PC-3 (cell line): ENCODE measurements at regions of chr10 and their contacts with region 1.

Region 1: GRCh38 chr10:91493313-91493712 is 83.2 kb downstream of the HECTD2 start:
- DNase-seq: peak; percentile 65
- ATAC-seq: 0 out of 2 replicates have a peak, but pooled peaks have one; percentile 33
- H3K4me3 ChIP-seq: no peak overlapping the region
- H3K27ac ChIP-seq: no peak overlapping the region
- H3K4me1 ChIP-seq: no peaks in the 10 kb centered on the region
- H3K27me3 ChIP-seq: no peaks in the 10 kb centered on the region
- CTCF ChIP-seq: peak; percentile 63

Region 2: GRCh38 chr10:91406322-91406721 is 87.0 kb before region 1 on chr10:
- CTCF ChIA-PET with region 1: no interaction called
- POLR2A ChIA-PET with region 1: no interaction called
- intact Hi-C with region 1: no loop called
- DNase-seq: no peak
- ATAC-seq: no peak
- H3K4me3 ChIP-seq: no peak overlapping the region
- H3K27ac ChIP-seq: no peak overlapping the region
- H3K4me1 ChIP-seq: peaks cover 9% of the 10 kb centered on the region; the same call in 1 of the 2 replicates
- H3K27me3 ChIP-seq: no peaks in the 10 kb centered on the region
- CTCF ChIP-seq: no peak

Region 3: DNA sequence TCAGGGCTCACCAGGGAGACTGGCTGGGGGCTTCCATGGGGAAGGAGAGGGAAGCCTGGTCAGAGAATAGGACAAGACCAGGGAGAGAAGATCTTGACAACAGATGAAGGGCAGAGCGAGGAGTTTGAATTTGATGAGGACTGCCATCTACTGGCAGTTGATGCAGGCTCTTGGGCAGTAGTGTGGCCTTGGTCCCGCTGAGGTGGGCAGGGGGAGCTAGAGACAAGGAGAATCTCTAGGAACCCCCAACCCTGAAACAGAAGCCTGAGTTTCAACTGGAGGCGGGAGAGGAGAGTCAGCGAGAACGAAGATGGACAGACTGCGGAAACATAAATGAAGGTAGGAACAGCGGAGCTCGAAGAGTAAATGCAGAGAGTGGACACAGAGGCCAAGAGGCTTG is 58.5 kb after region 1 on chr10:
- CTCF ChIA-PET with region 1: no interaction called
- POLR2A ChIA-PET with region 1: no interaction called
- intact Hi-C with region 1: loop called (anchors 2 kb)
- DNase-seq: peak; percentile 40
- ATAC-seq: peak; percentile 90
- H3K4me3 ChIP-seq: no peak overlapping the region
- H3K27ac ChIP-seq: no peak overlapping the region
- H3K4me1 ChIP-seq: 0 out of 2 replicates have a peak, but pooled peaks cover 4% of the 10 kb centered on the region
- H3K27me3 ChIP-seq: no peaks in the 10 kb centered on the region
- CTCF ChIP-seq: peak; percentile 78

Region 4: DNA sequence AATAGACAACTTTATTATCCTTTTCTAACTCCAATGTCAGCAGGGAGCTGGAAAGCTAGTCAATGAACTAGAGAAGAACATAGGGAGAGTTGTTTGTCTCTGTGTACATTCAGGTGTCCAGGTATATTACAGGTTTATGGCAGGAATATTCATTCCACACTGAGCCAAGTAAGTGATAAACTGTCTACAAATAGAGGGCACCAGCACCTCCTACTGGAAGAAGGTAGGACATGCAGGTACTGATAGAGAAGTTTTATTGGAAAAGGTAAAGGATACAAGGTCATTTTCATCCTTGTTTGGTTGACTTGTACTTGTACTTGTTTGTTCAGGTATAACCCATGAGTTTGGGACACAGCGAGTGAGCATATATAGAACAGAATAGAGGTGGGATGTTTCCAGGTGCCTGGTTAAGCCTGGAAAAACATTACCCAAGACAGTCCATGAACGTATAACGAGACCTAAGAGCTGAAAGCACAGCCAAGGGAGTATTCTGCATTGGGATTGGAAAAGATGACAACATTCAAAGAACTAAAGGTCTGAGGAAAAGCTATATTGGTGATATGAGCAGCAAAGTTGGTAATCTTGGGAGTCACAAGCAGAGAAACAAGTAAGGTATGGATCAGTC is 201.0 kb after region 1 on chr10:
- CTCF ChIA-PET with region 1: no interaction called
- POLR2A ChIA-PET with region 1: no interaction called
- intact Hi-C with region 1: loop called (anchors 5 kb)
- DNase-seq: peak; percentile 71
- ATAC-seq: peak; percentile 37; the same call in 1 of the 2 replicates
- H3K4me3 ChIP-seq: no peak overlapping the region
- H3K27ac ChIP-seq: no peak overlapping the region
- H3K4me1 ChIP-seq: 0 out of 2 replicates have a peak, but pooled peaks cover 3% of the 10 kb centered on the region
- H3K27me3 ChIP-seq: no peaks in the 10 kb centered on the region
- CTCF ChIP-seq: peak; percentile 85